ENCODE measurements at regions of chr1 and their contacts with region 1.

Region 1: GRCh38 chr1:202926720-202927491 is at the start of gene KLHL12:
- DNase-seq: peak; percentile 98
- ATAC-seq: peak; percentile 97
- H3K4me3 ChIP-seq: peak within 1 kb of the TSS; percentile 82
- H3K27ac ChIP-seq: peak within 1 kb of the TSS; percentile 81
- H3K4me1 ChIP-seq: peaks cover 24% of the 10 kb centered on the region
- H3K27me3 ChIP-seq: no peaks in the 10 kb centered on the region
- CTCF ChIP-seq: peak; percentile 82
- total RNA-seq, gene KLHL12: 25.2 and 26.7 TPM in 2 replicates

Region 2: GRCh38 chr1:202861420-202862200 is 65.3 kb before region 1 on chr1:
- CTCF ChIA-PET with region 1: no interaction called
- POLR2A ChIA-PET with region 1: no interaction called
- intact Hi-C with region 1: loop called (anchors 2 kb)
- DNase-seq: peak; percentile 97
- ATAC-seq: peak; percentile 96
- H3K4me3 ChIP-seq: peak overlapping the region; percentile 88
- H3K27ac ChIP-seq: no peak overlapping the region
- H3K4me1 ChIP-seq: peaks cover 14% of the 10 kb centered on the region; the same call in 1 of the 2 replicates
- H3K27me3 ChIP-seq: no peaks in the 10 kb centered on the region
- CTCF ChIP-seq: no peak

Region 3: DNA sequence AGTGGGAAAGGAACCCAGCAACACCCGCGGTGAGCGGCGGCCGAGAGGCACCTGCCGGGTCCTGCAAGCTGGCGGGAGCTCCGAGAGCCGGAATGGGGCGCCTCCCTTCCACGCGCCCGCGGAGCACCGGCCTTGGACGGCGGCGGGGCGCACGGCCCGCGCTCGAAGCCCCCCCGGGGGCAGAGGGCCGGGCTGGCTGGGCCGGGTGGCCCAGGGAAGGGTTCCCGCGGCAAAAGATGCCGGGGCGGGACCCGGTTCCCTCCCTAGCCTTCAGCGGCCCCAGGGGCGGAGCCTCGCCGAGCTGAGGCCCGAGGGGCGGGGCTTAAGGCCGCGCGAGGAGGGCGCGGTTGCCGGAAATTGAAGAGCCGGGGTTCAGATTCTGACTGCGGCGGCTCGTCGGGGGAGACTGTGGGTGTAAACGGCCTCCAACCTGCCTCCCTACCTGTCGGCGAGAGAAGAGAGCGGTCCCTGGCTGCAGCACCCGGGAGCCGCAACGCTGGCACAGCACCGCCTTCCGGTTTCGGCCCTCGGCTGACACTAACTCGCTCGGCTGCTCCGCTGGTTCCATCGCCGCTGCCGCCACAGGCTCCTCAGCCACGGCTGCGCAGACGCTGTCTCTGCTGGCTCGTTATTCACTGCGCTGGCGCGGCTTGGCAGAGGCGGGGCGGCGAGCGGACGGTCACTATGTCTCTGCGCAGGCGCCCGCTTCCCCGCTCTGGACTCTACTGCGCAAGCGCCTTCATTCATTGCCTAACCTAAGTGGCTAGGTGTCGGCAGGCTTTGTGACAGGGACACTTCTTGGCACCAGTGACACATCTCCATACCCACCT is 38.2 kb before region 1 on chr1 and contains the start of gene RABIF:
- CTCF ChIA-PET with region 1: no interaction called
- POLR2A ChIA-PET with region 1: no interaction called
- intact Hi-C with region 1: loop called (anchors 1 kb)
- DNase-seq: peak; percentile 98
- ATAC-seq: peak; percentile 94
- H3K4me3 ChIP-seq: peak within 1 kb of the TSS; percentile 92
- H3K27ac ChIP-seq: peak within 1 kb of the TSS; percentile 78
- H3K4me1 ChIP-seq: peaks cover 13% of the 10 kb centered on the region
- H3K27me3 ChIP-seq: no peaks in the 10 kb centered on the region
- CTCF ChIP-seq: no peak; the same call in 1 of the 2 replicates
- total RNA-seq, gene RABIF: 14.8 and 15.5 TPM in 2 replicates

Region 4: GRCh38 chr1:202952818-202953217 is 25.9 kb after region 1 on chr1:
- CTCF ChIA-PET with region 1: interaction called, 4 read pairs
- POLR2A ChIA-PET with region 1: no interaction called
- intact Hi-C with region 1: loop called (anchors 1 kb)
- DNase-seq: peak; percentile 80
- ATAC-seq: peak; percentile 73
- H3K4me3 ChIP-seq: no peak overlapping the region
- H3K27ac ChIP-seq: 0 out of 2 replicates have a peak overlapping the region, but pooled peaks have one; percentile 1
- H3K4me1 ChIP-seq: peaks cover 43% of the 10 kb centered on the region
- H3K27me3 ChIP-seq: no peaks in the 10 kb centered on the region
- CTCF ChIP-seq: no peak